Left colon (tissue), 2 donors: ENCODE measurements at regions of chr7 and their contacts with region 1.

Region 1: DNA sequence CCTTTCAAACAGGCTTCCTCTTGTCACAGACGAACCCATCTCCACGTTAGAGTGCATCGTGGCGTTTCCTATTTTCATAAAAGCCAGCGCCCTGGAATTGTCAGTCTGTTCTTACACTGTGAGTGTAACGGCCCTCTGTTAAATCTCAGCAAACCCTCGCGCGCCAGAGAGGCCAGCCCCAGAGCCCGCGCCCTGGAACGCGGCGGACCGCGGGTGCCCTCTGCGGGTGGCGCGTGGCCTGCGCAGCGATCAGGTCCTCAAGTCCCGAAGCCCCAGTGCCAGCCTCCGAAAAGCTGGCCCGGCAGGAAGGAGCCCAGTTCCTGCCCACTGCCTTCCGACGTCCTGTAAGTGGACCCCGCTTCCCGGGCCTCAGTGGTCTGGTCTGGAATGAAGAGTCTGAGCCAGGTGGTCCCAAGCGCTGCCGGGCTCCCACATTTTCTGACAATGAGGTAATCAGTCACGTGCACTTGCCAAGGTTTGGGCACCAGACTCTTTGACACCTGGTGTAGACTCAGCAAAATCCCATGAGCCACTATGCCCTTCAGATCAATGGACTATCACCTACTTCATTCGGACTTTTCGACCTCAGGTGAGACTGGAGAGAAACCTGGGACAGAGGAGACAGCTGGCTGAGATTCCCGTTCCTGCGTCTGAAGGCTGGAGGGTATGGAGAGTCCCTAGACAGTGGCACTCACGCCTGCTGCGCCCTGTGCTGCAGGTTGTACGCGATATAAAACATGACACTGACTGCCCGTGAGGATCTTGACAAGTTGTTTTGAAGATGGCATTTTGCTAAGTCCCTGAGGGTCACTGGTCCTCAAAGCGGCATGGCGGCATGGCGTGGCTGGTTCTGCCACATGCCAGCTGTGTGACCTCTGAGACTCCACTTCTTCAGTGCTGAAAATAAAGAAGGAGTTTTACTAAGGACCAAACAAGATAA is 109.4 kb upstream of the LANCL2 start:
- DNase-seq: peak; percentile 63 to 87
- ATAC-seq: peak; percentile 88

Region 2: DNA sequence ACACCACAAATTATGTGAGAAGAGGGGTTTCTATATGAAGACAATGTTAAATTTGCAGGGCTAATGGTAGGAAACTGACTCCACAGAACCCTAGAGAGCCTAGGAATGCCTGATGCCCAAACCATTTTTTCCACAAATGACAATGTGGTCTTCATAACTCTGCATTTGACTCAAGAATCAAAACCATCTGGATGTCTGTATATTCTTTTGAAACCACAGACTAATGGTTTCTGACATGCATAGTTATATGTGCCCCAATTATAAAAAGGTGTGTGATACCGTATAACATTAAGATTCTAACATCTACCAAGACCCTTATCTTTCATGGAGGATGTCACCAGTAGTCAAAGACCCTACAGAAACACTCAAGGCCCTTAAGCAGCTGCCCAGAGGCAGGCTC is 517.0 kb before region 1 on chr7:
- intact Hi-C with region 1: no loop called
- DNase-seq: no peak
- ATAC-seq: no peak

Region 3: DNA sequence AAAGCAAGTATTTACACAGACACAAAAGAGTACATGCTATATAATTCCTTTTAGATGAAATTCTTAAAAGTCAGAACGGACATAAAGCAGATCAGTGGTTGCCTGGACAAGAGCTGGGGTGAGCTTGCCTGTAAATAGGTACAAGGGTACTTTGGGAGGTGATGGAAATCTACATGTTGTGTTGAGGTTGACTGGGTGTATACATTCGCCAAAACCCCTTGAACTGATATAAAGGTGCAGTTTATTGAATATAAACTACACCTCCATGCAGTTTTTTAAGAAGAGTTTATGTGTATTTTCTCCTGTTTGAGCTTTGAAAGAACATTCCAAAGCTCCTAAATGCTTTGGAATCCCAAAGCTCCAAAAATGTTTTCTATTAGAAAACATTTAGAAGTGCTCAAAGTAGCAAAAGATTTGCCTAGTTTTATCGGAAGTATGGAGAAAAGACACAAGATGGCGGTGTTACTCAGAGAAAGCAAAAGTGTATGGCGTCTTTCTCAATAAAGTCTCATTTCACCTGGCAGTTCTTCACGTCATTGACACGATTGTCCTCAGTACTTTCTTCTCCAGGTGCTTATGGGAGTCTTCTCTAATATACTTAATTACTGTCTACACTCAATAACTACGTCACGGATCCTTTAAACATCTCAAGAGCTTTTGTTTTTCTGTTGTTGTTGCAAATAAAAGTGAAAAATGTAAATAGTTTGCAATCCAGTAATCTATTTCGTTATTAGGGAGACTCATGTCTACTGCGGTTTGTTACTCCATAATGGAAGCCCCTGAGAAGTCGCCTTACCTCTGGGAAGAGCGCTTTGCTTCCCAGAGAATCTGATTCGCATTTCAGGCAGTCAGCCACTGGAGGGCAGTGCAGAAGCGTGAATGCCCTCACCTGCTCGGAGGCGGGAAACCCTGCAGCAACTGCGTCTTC is 482.0 kb before region 1 on chr7:
- intact Hi-C with region 1: loop called (anchors 5 kb)
- DNase-seq: peak; percentile 75 to 88
- ATAC-seq: peak; percentile 99

Region 4: DNA sequence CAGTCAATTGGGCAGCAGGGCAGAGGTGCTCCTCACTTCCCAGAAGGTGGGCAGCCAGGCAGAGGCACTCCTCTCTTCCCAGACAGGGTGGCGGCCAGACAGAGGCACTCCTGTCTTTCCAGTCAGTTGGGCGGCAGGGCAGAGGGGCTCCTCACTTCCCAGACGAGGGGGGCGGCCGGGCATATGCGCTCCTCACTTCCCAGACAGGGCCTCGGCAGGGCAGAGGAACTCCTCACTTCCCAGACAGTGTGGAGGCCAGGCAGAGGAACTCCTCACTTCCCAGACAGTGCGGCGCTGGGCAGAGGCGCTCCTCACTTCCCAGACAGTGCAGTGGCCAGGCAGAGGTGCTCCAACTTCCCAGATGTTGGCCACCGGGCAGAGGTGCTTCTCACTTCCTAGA is 463.4 kb before region 1 on chr7:
- intact Hi-C with region 1: loop called (anchors 5 kb)
- DNase-seq: no peak
- ATAC-seq: no peak

Region 5: GRCh38 chr7:55432939-55433784 is 177.4 kb after region 1 on chr7:
- intact Hi-C with region 1: no loop called
- DNase-seq: no peak
- ATAC-seq: peak; percentile 70